CD14-positive monocyte (primary cell): ENCODE measurements at regions of chr3 and their contacts with region 1.

Region 1: DNA sequence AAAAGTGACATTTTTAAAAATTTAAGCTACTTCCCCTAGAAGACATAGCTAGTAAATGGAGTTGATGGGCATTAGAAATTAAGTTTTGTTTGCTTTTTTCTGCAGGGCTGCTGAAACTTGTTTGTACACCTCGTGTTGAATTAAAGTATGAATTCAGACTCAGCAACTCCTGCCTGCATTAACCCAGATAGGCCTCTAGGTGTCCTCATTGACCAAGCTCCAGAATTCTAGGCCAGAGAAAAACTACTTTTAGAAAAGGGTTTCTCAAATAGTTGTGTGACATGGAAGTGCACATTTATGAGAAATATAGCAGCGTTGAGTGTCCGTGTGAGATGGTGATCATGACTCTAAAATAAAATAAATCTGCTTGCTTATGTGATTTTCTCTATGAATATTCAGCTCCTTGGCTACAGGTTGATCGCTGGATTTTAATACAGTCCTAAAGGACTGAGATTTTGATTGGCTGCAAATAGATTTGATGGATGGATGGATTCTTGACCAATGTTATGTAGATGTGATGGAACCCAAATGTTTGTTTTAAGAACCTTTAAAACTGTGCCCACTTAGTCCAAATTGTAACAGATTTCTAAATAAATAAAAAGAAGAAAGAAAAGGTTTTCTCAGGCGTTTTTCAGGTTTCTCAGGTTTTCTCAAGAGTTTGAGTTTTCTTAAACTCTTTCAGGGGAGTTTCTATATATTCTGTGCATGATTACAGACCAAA is 39.4 kb upstream of the LMOD3 start:
- DNase-seq: peak; percentile 23 to 54 (median 43)
- H3K4me3 ChIP-seq: no peak overlapping the region
- H3K4me3 Mint-ChIP-seq: no peak overlapping the region
- H3K27ac ChIP-seq: no peak overlapping the region
- H3K27ac Mint-ChIP-seq: no peak overlapping the region
- H3K4me1 ChIP-seq: no peaks in the 10 kb centered on the region
- H3K4me1 Mint-ChIP-seq: peaks cover 3% of the 10 kb centered on the region
- H3K27me3 ChIP-seq: no peaks in the 10 kb centered on the region
- H3K27me3 Mint-ChIP-seq: peaks cover 0 to 3% (median 0%) of the 10 kb centered on the region in 3 donors
- CTCF ChIP-seq: peak; percentile 94

Region 2: DNA sequence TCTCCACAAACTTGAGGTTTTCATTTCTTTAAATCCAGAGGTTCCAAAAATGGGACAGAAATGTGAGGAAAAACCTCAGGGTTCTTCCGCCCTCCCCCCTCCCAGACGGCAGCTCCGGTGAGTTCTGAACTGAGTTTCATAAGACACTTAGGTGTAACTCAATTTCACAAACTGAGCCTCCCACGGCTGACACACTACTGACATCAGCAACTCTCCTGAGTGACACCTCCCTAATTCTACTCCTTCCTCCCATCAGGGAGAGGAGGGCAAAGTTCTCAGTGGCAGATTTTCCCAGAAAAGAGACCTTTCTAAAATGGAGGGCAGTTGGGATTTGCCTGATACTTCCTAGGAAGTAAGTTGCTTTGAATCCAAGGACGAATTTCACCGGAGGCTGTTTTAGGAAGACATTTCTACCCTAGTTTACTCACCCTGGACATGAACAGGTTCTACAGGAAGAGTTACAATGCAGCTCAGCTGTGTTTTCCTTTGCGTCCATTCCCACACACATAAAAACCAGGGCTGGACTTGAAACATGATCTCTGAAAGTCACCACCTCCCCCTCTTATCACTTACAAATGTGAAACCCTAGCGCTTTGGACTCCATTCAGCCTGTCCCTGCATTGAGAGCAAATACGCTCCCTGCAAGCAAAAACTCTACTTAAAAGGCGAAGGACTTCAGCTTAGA is 38.8 kb after region 1 on chr3:
- intact Hi-C with region 1: no loop called
- DNase-seq: no peak
- H3K4me3 ChIP-seq: no peak overlapping the region
- H3K4me3 Mint-ChIP-seq: peak overlapping the region in 1 of 2 donors; percentile 41
- H3K27ac ChIP-seq: no peak overlapping the region
- H3K27ac Mint-ChIP-seq: peak overlapping the region in 3 of 7 donors; percentile 26 to 68 (median 55)
- H3K4me1 ChIP-seq: peaks cover 3% of the 10 kb centered on the region in 2 donors
- H3K4me1 Mint-ChIP-seq: peaks cover 4% of the 10 kb centered on the region
- H3K27me3 ChIP-seq: no peaks in the 10 kb centered on the region
- H3K27me3 Mint-ChIP-seq: no peaks in the 10 kb centered on the region
- CTCF ChIP-seq: no peak

Region 3: GRCh38 chr3:69306239-69307185 is 144.8 kb after region 1 on chr3:
- intact Hi-C with region 1: loop called (anchors 5 kb)
- DNase-seq: peak; percentile 77 to 88 (median 86)
- H3K4me3 ChIP-seq: no peak overlapping the region
- H3K4me3 Mint-ChIP-seq: no peak overlapping the region
- H3K27ac ChIP-seq: no peak overlapping the region
- H3K27ac Mint-ChIP-seq: peak overlapping the region in 6 of 7 donors; percentile 10 to 85 (median 50)
- H3K4me1 ChIP-seq: peaks cover 4 to 8% of the 10 kb centered on the region in 2 donors
- H3K4me1 Mint-ChIP-seq: peaks cover 10% of the 10 kb centered on the region
- H3K27me3 ChIP-seq: no peaks in the 10 kb centered on the region
- H3K27me3 Mint-ChIP-seq: peaks cover 0 to 3% (median 0%) of the 10 kb centered on the region in 3 donors
- CTCF ChIP-seq: peak; percentile 90

Region 4: DNA sequence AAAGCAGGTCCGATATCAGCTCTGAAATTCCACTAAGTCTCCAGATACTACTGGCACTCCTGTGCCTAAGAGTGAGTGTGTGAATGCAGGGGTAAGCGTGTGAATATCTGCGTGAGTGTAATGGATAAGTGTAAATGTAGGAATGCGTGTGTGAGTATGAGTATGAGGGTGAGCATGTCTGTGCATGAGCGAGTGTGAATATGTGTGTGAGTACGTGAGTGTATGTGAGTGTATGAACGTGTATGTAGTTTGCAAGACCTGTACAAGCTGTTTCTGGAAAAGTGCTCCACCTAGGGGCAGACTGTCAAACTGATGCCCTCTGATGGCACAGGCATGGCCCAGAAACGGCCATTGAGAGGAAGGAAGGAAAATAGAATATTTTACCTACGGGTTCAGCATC is 248.5 kb after region 1 on chr3:
- intact Hi-C with region 1: loop called (anchors 10 kb)
- DNase-seq: peak; percentile 52 to 67 (median 59)
- H3K4me3 ChIP-seq: no peak overlapping the region
- H3K4me3 Mint-ChIP-seq: no peak overlapping the region
- H3K27ac ChIP-seq: no peak overlapping the region
- H3K27ac Mint-ChIP-seq: peak overlapping the region in 2 of 7 donors; percentile 2 to 16
- H3K4me1 ChIP-seq: peaks cover 7% of the 10 kb centered on the region in 2 donors
- H3K4me1 Mint-ChIP-seq: peaks cover 9% of the 10 kb centered on the region
- H3K27me3 ChIP-seq: no peaks in the 10 kb centered on the region
- H3K27me3 Mint-ChIP-seq: no peaks in the 10 kb centered on the region
- CTCF ChIP-seq: peak; percentile 81

Region 5: DNA sequence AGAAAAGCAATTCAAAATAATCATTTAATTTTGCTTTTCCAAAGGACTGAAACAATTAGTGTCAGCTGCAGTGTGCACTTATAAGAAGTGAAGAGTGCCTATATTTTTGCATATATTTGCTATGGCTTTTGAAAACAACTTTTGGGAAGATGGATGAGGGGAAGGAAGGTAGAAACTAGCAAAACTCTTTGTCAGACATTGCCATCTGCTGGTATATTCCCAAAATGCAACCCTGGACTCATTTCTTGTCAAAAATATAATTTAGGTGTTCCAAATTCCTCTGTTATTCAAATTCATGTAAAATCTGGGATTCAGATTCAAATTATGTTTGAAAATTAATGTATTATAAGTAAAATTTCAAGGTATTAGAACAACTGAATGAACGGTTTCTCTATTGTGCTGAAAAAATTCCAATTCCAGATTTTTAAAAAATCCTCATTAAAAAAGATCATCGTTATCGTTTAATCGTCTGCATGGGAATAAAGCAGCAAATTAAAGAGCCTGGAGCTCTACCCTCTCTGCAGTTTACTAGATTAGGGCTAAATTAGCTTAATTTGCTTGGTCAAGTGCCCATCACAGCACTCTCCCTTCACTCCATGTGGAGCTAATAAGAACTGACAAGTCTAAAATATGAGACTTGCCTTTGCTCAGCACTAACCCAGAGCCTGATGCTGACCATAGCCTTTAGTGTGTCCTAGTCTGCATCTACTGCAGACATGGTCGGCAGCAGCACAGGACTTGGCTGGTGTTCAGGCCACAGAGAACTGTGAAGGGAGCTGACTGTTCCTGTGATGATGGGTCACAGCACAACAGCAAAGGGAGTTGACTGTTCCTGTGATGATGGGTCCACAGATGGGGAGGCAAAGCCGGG is 509.6 kb after region 1 on chr3:
- intact Hi-C with region 1: loop called in 1 of 2 experiments (anchors 5 kb)
- DNase-seq: peak; percentile 22 to 47 (median 39)
- H3K4me3 ChIP-seq: no peak overlapping the region
- H3K4me3 Mint-ChIP-seq: no peak overlapping the region
- H3K27ac ChIP-seq: no peak overlapping the region
- H3K27ac Mint-ChIP-seq: peak overlapping the region in 1 of 7 donors; percentile 6
- H3K4me1 ChIP-seq: no peaks in the 10 kb centered on the region
- H3K4me1 Mint-ChIP-seq: no peaks in the 10 kb centered on the region
- H3K27me3 ChIP-seq: no peaks in the 10 kb centered on the region
- H3K27me3 Mint-ChIP-seq: no peaks in the 10 kb centered on the region
- CTCF ChIP-seq: peak; percentile 86